Right ventricle myocardium inferior (tissue), 1 donor: ENCODE measurements at regions of chr16 and their contacts with region 1.

Region 1: DNA sequence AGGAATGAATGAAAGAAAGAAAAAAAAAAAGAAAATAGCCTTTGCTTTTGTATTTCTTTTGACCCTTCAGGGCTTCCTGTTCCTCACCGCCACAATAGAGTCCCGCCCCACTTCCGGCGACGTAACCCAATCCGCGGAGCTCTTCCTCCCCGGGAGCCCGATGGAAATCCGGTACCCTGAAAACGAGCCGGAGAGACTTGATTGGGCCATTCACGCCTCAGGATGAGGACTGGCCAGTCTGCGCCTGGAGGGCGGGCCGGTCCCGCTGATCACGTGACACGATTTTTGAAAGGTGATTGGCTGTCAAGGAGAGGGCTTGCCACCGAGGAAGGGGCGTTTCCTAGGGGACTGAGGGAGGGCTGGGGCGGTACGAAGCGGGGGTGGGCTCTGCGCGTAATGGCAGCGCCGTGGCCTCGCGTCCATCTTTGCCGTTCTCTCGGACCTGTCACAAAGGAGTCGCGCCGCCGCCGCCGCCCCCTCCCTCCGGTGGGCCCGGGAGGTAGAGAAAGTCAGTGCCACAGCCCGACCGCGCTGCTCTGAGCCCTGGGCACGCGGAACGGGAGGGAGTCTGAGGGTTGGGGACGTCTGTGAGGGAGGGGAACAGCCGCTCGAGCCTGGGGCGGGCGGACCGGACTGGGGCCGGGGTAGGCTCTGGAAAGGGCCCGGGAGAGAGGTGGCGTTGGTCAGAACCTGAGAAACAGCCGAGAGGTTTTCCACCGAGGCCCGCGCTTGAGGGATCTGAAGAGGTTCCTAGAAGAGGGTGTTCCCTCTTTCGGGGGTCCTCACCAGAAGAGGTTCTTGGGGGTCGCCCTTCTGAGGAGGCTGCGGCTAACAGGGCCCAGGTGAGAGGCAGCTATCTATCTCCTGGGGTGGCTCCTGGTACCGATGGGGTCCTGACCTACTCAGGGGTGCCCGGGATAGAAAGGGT is at the starts of genes PSME3IP1 and RSPRY1:
- DNase-seq: peak; percentile 98
- ATAC-seq: peak; percentile 99
- total RNA-seq, gene PSME3IP1: 54.2 TPM
- total RNA-seq, gene RSPRY1: 13.8 TPM

Region 2: GRCh38 chr16:56931892-56932720 is 254.1 kb before region 1 on chr16 and contains the start of gene HERPUD1:
- intact Hi-C with region 1: loop called (anchors 10 kb)
- DNase-seq: peak; percentile 99
- ATAC-seq: peak; percentile 97
- total RNA-seq, gene HERPUD1: 114 TPM

Region 3: DNA sequence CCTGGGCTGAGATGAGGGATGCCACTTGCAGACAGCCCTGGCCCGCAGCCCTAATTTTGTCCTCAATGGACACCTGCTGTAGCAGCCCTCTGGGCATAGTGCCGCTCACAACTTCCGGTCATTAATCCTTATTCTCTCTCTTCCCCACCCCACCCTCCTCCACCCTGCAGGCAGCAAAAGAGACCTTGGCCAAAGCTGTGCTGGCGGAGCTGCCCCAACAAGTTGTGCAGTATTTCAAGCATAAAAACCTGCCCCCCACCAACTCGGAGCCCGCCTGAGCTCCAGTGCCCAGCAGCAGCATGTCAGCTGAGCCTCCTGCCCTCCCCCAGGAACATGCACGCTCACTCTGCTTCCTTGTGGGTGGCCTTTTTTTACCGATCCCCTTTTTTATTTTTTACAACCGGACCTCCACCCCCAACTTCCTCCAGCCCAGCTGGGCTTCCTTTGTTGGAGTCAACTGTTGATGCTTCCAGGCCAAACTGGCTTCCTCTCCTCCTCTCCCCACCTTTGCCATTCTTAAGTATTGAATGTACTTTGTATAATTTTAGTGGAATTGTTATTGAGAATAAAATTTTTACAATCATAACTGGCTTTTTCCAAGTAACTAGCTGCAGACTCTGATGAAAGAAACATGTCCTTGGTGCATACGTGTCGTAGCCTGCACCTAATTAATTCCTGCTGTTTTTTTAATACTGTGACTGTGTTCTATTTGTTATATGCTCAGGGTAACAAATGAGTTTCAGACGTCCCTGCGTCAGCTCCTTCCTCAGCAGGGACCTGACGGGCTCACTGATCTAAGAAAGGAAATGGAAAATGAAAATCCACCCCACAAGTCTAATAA is 38.6 kb before region 1 on chr16:
- intact Hi-C with region 1: no loop called
- DNase-seq: no peak
- ATAC-seq: no peak

Region 4: DNA sequence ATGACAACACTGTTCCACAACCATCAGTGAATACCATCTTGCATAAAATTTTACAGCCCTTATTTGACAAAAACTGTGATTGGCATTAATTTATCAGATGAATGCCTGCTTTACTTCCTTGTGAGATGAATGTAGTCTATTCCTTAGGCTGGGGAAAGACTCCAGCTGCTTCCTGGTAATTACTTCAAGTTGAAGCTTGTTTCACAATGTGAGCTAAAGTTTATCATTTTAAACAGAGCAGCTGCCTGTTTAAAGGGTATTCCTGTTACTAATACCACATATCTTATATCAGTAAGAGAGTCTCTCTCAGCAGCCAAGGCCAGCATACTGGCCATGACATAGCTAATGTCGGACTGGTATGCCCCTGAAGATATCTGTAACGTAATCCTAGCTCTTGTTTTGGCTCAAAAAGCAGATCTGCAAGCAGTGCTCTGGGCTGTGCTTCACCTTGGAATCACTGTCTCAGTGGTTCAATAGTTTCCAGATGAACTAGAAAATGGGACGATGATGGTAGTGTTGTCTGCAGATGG is 45.7 kb after region 1 on chr16:
- intact Hi-C with region 1: loop called (anchors 5 kb)
- DNase-seq: no peak
- ATAC-seq: no peak

Region 5: DNA sequence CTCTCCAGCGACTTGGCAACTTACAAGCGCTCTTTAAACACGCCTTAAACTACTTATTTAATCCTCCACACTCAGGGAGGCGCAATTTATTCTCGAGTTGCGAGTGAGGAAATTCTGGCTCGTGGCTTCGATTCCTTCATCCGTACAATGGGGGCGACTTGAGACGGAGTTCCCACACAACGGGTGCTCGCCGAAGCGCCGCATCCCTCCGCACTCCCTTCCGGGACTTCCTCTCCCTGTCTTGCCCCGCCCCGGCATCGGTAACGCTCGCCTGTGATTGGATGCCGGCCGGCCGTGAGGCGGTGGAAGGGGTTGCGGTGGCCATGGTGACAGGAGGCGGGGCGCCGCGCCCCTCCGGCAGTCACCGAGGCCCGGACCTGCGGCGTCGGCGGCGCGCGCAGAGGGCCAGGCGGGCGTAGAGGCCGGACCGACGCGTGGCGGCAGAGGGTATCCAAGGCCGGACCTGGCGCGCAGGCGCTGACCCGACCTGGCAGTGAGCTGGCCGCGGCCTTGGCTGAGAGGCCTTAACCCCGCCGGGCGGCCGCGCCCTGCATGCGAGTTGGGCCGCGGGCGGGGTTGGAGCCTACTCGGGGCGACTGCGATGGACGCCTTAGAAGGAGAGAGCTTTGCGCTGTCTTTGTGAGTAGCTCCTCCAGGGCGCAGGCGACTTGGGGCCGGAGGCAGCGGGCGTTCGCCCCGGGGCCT is 58.7 kb after region 1 on chr16 and contains the start of gene ARL2BP:
- intact Hi-C with region 1: loop called (anchors 5 kb)
- DNase-seq: peak; percentile 99
- ATAC-seq: peak; percentile 99
- total RNA-seq, gene ARL2BP: 64.1 TPM

Region 6: GRCh38 chr16:57394444-57394843 is 208.2 kb after region 1 on chr16:
- intact Hi-C with region 1: no loop called
- DNase-seq: no peak
- ATAC-seq: no peak

Region 7: GRCh38 chr16:57422026-57422944 is 236.1 kb after region 1 on chr16:
- intact Hi-C with region 1: no loop called
- DNase-seq: no peak
- ATAC-seq: peak; percentile 49

Region 8: GRCh38 chr16:58515125-58515870 is 1329.1 kb after region 1 on chr16 and contains the start of gene SETD6:
- intact Hi-C with region 1: loop called (anchors 5 kb)
- DNase-seq: peak; percentile 93
- ATAC-seq: peak; percentile 96
- total RNA-seq, gene SETD6: 13.0 TPM